Right lobe of liver (tissue), 6 donors: ENCODE measurements at regions of chr3 and their contacts with region 1.

Region 1: DNA sequence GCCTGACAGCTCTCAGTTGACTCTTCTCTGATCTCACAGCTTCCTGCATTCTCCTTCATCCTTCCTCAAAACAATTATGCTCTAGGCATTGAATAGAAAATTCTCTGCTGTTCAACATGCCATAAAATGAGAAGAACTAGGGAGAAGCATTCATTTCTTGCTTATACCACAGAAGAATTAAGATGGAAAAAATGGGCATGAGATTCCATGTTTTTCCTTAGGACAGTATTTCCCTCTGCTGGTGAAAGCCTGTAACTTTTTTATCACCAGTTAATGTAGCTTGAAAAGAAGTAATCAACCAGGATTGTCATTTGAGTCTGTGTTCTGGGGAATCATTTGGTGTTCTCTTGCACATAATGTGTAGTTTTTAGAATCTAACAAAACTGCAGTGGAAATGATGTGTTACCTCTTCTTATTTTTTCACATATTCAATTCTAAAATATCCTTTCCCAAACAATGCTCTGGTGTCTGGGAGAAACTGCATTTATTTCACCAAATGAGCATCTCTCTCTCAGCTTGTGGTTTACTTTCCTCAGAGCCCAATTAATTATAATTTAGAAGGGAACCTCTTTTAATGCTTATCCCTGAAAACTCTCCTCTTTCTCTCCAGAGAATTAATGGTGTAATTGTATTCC is 92.8 kb upstream of the DCBLD2 start:
- DNase-seq: no peak
- ATAC-seq: peak; percentile 65 to 79 (median 76)
- H3K4me3 ChIP-seq: no peak overlapping the region
- H3K27ac ChIP-seq: no peak overlapping the region
- H3K4me1 ChIP-seq: no peaks in the 10 kb centered on the region
- H3K27me3 ChIP-seq: no peaks in the 10 kb centered on the region
- CTCF ChIP-seq: peak; percentile 56 to 74 (median 65)
- POLR2A ChIP-seq: no peak

Region 2: DNA sequence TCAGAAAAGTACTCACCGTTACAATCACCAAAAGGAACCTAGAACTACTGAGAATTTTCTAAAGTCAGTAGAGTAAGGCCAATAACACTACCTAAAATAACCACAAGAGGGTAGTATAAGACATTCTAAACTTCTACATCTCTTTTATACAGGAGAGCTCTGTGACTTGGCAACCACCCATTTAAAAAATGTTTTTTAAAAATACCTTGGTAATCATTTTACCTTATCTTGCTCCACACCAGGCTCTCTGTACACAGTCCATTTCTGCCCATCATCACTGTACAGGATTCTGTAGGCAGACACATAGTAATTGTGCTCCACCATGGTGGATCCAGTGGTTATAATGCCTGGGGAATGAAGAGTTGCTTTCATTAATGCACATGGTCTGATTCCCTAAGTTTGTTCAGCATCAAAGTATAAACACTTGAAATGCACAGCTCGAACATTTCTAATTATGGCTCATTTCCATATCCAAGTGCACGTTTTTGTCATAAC is 176.7 kb before region 1 on chr3:
- intact Hi-C with region 1: loop called (anchors 5 to 10 kb)
- DNase-seq: no peak
- ATAC-seq: peak; percentile 66 to 77 (median 74)
- H3K4me3 ChIP-seq: no peak overlapping the region
- H3K27ac ChIP-seq: no peak overlapping the region
- H3K4me1 ChIP-seq: peaks cover 0 to 14% (median 6%) of the 10 kb centered on the region in 4 donors
- H3K27me3 ChIP-seq: no peaks in the 10 kb centered on the region
- CTCF ChIP-seq: peak; percentile 69 to 87 (median 80)
- POLR2A ChIP-seq: no peak

Region 3: DNA sequence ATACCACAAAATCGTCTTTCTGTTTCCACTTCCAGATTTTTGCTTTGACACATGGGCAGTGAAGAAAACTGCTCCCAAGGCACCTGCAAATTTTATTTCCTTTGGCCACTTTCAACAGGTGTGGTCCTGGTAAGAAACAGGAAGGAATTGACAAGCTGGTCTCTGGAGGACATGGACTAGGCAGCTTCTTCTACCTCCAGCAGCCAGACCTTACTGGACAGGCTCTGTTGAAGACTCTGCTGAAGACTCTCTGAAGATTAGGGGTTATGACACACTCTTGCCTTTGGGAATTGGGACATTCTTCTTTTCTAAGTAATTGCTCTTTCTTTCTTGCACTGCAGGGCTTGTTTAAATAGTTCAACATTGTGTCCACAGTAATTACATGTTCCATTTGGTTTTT is 54.9 kb after region 1 on chr3:
- intact Hi-C with region 1: no loop called
- DNase-seq: no peak
- ATAC-seq: no peak
- H3K4me3 ChIP-seq: no peak overlapping the region
- H3K27ac ChIP-seq: no peak overlapping the region
- H3K4me1 ChIP-seq: no peaks in the 10 kb centered on the region
- H3K27me3 ChIP-seq: no peaks in the 10 kb centered on the region
- CTCF ChIP-seq: no peak
- POLR2A ChIP-seq: no peak